ENCODE measurements at regions of chr1 and their contacts with region 1.

Region 1: DNA sequence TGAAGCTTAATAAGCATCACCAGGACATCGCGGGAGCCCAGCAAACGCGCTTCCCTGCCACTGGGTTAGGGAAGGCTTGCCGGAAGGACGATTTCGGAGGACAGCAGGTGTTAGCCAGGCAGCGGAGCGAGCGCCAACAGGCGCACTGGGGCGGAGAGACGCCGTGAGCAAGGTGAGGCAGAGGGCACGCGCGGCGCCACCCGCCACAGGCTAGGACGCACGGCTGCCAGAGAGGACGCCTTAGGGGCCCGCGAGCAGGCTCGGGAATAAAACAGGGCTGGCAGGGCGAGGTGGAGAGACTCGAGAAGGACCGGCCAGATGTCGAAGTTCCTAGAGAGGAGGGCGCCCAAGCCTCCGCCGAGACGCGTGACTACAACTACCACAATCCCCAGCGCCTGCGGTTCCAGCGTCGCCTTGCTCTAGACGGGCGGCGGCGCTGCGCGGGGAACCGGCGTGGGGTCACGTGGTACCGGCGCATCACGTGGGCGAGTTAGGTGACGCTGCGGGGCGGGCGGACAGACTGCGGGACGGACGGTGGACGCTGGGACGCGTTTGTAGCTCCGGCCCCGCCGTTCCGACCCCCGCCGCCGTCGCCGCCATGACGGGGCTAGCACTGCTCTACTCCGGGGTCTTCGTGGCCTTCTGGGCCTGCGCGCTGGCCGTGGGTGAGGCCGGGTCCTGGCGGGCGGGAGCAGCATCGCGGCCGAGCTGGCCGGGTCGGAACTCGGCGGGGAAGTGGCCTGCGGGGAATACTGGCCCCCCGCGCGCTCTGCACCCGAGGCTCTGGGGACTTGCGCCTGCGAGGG is at the start of gene ATP6V0B:
- DNase-seq: peak; percentile 84
- ATAC-seq: peak; percentile 71
- H3K4me3 ChIP-seq: peak within 1 kb of the TSS; percentile 95 to 96 (median 95)
- H3K27ac ChIP-seq: peak within 1 kb of the TSS; percentile 75
- H3K4me1 ChIP-seq: peaks cover 50% of the 10 kb centered on the region
- H3K27me3 ChIP-seq: no peaks in the 10 kb centered on the region
- CTCF ChIP-seq: peak; percentile 66
- EP300 ChIP-seq: 0 out of 4 replicates have a peak, but pooled peaks of 1 of the 2 experiments have one; percentile 7
- POLR2A ChIP-seq: peak in 1 of 2 experiments; percentile 71; a peak in 2 of 4 replicates
- RAD21 ChIP-seq: no peak; the same call in 1 of the 2 replicates
- total RNA-seq, gene ATP6V0B: 76.4 and 161 TPM in 2 replicates

Region 2: DNA sequence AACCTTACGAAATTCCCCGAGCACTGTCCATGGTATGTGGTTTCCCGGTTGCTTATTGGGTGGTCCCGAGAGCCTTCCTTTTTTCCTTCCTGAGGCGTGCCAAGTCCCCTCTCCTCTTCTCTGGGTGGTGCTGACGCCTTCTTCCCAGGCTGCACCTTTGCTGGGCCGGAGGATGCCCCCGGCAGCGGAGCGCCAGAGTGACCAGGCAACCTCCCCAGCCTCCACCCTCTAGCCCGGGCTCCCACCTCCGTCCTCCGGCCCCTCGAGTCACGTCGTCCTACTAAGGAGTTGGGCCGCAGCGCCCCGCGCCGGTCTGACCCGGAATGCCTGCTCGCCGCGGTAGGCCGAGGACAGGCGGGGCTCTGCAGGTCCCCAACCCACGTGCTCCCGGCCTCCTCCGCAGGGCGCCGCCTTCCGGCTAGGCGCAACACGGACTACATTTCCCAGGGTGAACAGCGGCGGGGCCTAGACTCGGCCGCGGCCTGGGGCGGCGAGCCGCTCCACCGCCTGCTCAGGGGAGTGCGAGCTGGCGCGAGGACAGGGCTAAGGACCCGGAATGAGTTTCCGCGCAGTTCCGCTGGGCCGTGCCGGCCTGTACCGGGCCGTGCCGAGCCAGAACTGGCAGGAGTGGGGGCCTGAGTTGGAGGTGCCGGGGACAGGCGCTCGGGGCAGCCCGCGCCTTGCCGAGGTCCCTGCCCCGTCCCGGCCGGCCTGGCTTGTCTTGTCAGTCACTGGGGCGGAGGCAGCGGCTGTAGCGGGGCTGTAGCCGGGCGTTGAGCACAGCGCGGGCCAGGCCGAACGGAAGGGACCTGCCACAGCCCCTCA is 28.2 kb before region 1 on chr1 and contains the start of gene IPO13:
- CTCF ChIA-PET with region 1: no interaction called
- POLR2A ChIA-PET with region 1: interaction called, 15 read pairs
- in situ Hi-C with region 1: no loop called
- intact Hi-C with region 1: loop called (anchors 1 kb)
- DNase-seq: peak; percentile 92
- ATAC-seq: peak; percentile 92
- H3K4me3 ChIP-seq: peak within 1 kb of the TSS; percentile 69 to 90 (median 79)
- H3K27ac ChIP-seq: peak within 1 kb of the TSS; percentile 93
- H3K4me1 ChIP-seq: peaks cover 27% of the 10 kb centered on the region
- H3K27me3 ChIP-seq: no peaks in the 10 kb centered on the region; a peak in 1 of 5 replicates
- CTCF ChIP-seq: peak; percentile 99
- EP300 ChIP-seq: no peak
- POLR2A ChIP-seq: peak; percentile 76 to 87
- RAD21 ChIP-seq: peak; percentile 72
- total RNA-seq, gene IPO13: 14.3 and 15.6 TPM in 2 replicates

Region 3: DNA sequence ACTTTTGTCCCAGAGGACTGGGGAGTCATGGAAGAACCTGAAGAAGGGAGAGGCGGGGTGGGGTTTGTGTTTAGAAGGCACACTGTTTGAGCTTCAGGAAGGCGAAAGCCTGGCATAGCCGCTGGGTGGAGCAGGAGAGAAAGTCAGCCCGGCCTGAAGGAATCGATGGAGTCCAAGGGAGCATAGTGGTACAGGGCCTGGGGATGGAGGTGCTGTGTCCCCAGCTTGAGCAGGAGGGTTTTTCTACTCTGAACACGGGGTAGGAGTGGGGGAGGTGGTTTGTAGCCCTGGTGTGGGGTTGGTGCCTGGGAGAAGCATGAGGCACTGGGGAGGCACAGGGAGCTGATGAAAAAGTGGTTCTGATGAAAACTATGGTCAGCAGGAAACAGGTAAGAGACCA is 12.1 kb after region 1 on chr1:
- CTCF ChIA-PET with region 1: no interaction called
- POLR2A ChIA-PET with region 1: interaction called, 32 read pairs
- in situ Hi-C with region 1: no loop called
- intact Hi-C with region 1: no loop called
- DNase-seq: no peak
- ATAC-seq: peak; percentile 46
- H3K4me3 ChIP-seq: peak overlapping the region in 1 of 3 experiments; percentile 46; a peak in 2 of 6 replicates
- H3K27ac ChIP-seq: peak overlapping the region; percentile 62
- H3K4me1 ChIP-seq: peaks cover 63% of the 10 kb centered on the region
- H3K27me3 ChIP-seq: no peaks in the 10 kb centered on the region
- CTCF ChIP-seq: peak; percentile 63
- EP300 ChIP-seq: no peak
- POLR2A ChIP-seq: no peak
- RAD21 ChIP-seq: no peak

Region 4: DNA sequence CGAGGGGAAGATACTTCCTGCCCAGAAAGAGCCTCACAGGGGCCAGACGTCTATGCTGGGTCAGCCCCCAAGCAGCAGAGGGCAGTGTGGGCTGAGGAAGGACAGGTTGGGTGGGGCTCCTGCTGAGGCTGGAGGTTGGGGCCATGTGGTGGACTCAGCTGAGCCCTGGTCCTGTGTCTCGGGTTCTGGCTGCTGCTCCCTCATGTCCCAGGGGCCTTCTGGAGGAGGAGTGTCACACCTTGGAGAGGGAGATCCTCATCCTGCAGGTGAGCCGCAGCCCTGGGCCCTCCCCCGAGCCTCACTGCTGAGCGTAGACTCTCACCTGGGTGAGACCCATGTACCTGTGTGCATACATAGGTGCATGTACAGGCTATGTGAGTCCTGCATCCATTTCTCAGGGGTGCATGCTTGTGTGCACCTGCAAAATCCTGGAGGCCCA is 20.3 kb after region 1 on chr1:
- CTCF ChIA-PET with region 1: no interaction called
- POLR2A ChIA-PET with region 1: interaction called, 32 read pairs
- in situ Hi-C with region 1: no loop called
- intact Hi-C with region 1: no loop called
- DNase-seq: peak; percentile 40
- ATAC-seq: peak; percentile 63
- H3K4me3 ChIP-seq: no peak overlapping the region
- H3K27ac ChIP-seq: no peak overlapping the region
- H3K4me1 ChIP-seq: peaks cover 54% of the 10 kb centered on the region
- H3K27me3 ChIP-seq: no peaks in the 10 kb centered on the region
- CTCF ChIP-seq: peak; percentile 86
- EP300 ChIP-seq: no peak
- POLR2A ChIP-seq: no peak
- RAD21 ChIP-seq: peak; percentile 57; the same call in 1 of the 2 replicates

Measured in HepG2 (cell line).